ENCODE measurements at regions of chr2 and their contacts with region 1.

Region 1: DNA sequence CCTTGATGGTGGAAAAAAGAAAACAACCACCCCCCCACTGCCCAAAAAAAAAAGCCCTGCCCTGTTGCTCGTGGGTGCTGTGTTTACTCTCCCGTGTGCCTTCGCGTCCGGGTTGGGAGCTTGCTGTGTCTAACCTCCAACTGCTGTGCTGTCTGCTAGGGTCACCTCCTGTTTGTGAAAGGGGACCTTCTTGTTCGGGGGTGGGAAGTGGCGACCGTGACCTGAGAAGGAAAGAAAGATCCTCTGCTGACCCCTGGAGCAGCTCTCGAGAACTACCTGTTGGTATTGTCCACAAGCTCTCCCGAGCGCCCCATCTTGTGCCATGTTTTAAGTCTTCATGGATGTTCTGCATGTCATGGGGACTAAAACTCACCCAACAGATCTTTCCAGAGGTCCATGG is 28.0 kb downstream of the MAL start:
- DNase-seq: peak; percentile 59
- H3K4me3 Mint-ChIP-seq: no peak overlapping the region
- H3K27ac Mint-ChIP-seq: no peak overlapping the region
- H3K4me1 Mint-ChIP-seq: peaks cover 81% of the 10 kb centered on the region
- H3K27me3 Mint-ChIP-seq: no peaks in the 10 kb centered on the region

Region 2: DNA sequence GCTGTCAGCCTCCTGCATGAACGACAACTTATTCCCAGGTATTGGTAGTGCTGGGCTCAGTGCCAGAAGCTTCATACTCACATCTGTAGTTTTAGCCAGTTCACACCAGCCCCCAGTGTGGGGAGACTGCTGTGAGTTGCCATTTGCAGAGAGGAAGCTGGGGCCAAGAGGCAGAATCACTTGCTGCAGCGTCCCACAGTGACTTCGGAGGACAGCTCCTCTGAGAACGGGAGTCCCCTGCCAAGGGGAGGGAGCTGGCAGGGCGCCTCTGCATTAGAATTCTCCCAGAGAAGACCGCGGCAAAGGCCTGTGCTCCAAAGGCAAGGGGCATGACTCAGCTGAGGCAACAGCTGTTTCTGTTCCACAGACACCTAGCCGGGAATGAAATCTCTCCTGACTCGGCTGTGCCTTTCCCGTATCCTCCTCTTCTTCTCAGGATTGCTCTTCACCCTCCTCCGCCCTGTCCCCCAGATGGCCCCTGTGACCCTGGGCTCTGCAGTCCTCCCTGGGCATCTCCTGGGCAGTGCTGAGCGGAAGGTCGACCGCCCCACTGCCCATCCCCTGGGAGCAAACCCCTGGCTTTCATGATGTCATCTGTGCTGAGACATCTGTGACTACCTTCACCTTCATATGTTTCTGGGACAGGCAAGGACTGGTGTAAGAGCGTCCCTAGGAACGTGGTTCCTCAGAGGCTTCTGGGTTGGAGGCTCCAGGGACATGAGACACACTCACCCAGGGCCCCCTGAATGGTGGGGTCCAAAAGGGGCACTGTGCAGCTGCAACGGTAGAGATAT is 10.0 kb before region 1 on chr2:
- CTCF ChIA-PET with region 1: interaction called, 21 read pairs
- intact Hi-C with region 1: loop called (anchors 1 kb)
- DNase-seq: peak; percentile 83
- H3K4me3 Mint-ChIP-seq: no peak overlapping the region
- H3K27ac Mint-ChIP-seq: no peak overlapping the region
- H3K4me1 Mint-ChIP-seq: peaks cover 80% of the 10 kb centered on the region
- H3K27me3 Mint-ChIP-seq: no peaks in the 10 kb centered on the region

Measured in activated naive CD4-positive, alpha-beta T cell treated with anti-CD3 and anti-CD28 coated beads for 36 hours (primary cell).